PC-9 (cell line): ENCODE measurements at regions of chr14 and their contacts with region 1.

Region 1: DNA sequence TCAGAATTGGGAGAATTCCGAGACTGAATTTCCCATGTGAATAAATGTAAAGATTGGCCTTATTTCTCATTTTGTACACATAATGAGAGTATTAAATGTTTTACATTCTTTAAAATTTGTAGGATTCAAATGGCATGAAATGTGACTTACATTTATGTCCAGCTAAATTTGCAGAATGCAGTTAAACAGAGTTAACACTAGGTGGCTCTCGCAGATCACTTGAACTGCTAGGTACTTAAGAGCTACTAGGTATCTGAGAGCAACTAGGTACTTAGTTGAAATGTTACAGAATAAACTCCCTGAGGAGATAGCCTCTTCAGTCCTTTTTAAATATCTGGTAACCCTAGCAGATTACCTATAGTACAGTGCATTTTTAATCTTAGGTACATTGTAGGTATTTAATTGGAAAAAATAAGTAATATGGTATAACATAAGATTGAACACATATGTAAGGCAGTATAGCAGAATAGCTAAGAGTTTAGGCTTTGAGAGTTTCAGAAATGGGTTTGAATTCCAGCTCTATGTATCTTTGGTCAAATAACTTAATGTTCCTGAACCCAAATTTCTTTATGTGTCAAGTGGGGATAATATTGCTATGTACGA is 73.8 kb downstream of the KIAA0586 start:
- DNase-seq: peak; percentile 2 to 51
- H3K4me3 ChIP-seq: no peak overlapping the region
- H3K27ac ChIP-seq: no peak overlapping the region
- H3K4me1 ChIP-seq: no peaks in the 10 kb centered on the region
- H3K27me3 ChIP-seq: no peaks in the 10 kb centered on the region
- CTCF ChIP-seq: peak; percentile 86

Region 2: DNA sequence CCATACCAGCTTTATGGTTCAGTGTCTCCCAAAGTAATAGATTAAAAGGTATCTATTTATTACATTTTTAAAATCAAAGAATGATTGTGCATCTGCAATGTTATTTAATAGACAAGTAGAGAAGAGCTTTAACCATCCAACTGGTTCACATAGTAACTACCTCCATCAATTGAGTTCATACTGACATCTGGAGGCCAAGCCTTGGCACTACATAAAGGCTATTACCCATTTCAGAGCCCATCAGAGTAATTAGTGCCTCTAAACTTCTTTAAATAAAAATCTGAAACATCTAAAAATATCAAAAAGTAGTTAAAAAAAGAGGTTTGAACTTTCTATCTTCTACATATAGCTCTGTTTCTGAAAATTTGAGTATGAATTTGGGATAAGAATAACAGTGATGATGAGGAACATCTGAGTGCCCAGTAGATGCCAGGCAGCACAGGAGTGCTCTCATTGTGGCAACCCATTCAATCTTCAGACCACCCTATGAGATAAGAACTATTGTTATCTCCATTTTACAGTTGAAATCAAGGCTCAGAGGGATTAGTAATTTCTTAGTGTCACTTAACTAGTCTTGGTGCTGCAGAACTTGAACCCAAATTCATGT is 554.2 kb after region 1 on chr14:
- CTCF ChIA-PET with region 1: interaction called, 4 read pairs
- POLR2A ChIA-PET with region 1: no interaction called
- intact Hi-C with region 1: loop called (anchors 1 kb)
- DNase-seq: peak in 1 of 2 experiments; percentile 7
- H3K4me3 ChIP-seq: no peak overlapping the region
- H3K27ac ChIP-seq: no peak overlapping the region
- H3K4me1 ChIP-seq: no peaks in the 10 kb centered on the region
- H3K27me3 ChIP-seq: no peaks in the 10 kb centered on the region
- CTCF ChIP-seq: peak; percentile 75

Region 3: DNA sequence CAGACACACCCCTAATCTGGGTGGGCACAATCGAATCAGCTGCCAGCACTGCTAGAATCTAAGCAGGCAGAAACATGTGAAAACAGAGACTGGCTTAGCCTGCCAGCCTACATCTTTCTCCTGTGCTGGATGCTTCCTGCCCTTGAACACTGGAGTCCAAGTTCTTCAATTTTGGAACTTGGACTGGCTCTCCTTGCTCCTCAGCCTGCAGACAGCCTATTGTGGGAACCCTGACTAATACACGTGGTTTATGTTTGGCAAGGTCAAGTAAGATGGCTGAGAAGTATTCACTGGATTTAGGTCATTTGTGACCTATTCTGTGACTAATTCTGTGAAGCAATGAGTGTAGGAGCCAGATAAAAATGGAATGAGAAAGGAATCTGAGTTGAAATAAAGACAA is 952.8 kb after region 1 on chr14:
- CTCF ChIA-PET with region 1: no interaction called
- POLR2A ChIA-PET with region 1: no interaction called
- intact Hi-C with region 1: loop called (anchors 10 kb)
- DNase-seq: no peak
- H3K4me3 ChIP-seq: no peak overlapping the region
- H3K27ac ChIP-seq: no peak overlapping the region
- H3K4me1 ChIP-seq: no peaks in the 10 kb centered on the region
- H3K27me3 ChIP-seq: no peaks in the 10 kb centered on the region
- CTCF ChIP-seq: no peak